PC-3 (cell line): ENCODE measurements at regions of chr7 and their contacts with region 1.

Region 1: GRCh38 chr7:120431016-120431415 is 158.0 kb downstream of the KCND2 start:
- DNase-seq: no peak
- ATAC-seq: no peak
- H3K4me3 ChIP-seq: no peak overlapping the region
- H3K27ac ChIP-seq: no peak overlapping the region
- H3K4me1 ChIP-seq: no peaks in the 10 kb centered on the region
- H3K27me3 ChIP-seq: no peaks in the 10 kb centered on the region
- CTCF ChIP-seq: no peak

Region 2: GRCh38 chr7:120486164-120486563 is 55.1 kb after region 1 on chr7:
- CTCF ChIA-PET with region 1: interaction called, 11 read pairs
- POLR2A ChIA-PET with region 1: no interaction called
- intact Hi-C with region 1: no loop called
- DNase-seq: peak; percentile 49
- ATAC-seq: peak; percentile 97
- H3K4me3 ChIP-seq: no peak overlapping the region
- H3K27ac ChIP-seq: no peak overlapping the region
- H3K4me1 ChIP-seq: peaks cover 8% of the 10 kb centered on the region; the same call in 1 of the 2 replicates
- H3K27me3 ChIP-seq: no peaks in the 10 kb centered on the region
- CTCF ChIP-seq: no peak